MCF 10A (cell line): ENCODE measurements at regions of chrX and their contacts with region 1.

Region 1: GRCh38 chrX:107135049-107135964 is 16.7 kb upstream of the RBM41 start:
- DNase-seq: peak; percentile 79
- H3K4me3 Mint-ChIP-seq: peak overlapping the region; percentile 56
- H3K27ac Mint-ChIP-seq: peak overlapping the region; percentile 96
- H3K4me1 Mint-ChIP-seq: peaks cover 15% of the 10 kb centered on the region
- H3K27me3 Mint-ChIP-seq: peaks cover 55% of the 10 kb centered on the region
- CTCF ChIP-seq: no peak

Region 2: DNA sequence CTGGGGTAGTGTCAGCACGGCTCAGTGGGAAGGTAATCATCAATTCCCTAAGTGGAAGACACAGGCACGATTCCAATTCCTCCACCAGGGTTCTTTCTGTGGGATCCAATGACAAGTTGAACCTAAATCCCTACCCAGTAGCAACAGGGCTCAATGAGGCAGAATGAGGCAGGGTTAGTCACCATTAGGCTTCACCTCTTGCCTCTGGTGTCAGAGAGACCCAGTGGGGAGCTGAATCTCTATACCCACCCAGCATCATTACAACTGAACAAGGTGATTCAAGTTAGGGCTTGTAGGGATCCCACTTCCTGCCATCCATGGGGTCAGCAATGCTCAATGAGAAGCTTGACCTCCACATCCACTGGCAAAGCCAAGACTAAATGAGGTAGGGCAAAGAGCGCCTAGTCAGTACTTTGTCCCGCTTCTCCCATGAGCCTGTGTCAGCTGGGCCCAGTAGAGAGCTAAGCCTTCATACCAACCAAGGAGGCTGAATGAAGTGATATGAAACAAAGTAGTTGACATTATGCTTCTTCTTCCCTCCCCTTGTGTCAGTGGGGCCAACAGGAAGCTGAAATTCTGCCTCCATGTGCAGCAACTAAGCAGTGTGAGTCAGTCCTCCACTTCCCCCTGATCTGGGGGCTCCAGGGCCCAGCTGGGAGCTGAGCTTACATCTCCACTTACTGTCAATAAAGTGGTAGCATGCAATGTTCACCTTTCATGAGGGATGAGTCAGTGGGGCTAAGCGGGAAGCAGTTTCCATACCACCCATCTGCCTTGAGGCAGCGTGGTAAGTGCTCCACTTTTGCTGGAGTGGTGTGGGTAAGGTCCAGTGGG is 19.7 kb after region 1 on chrX:
- CTCF ChIA-PET with region 1: no interaction called
- POLR2A ChIA-PET with region 1: interaction called, 13 read pairs
- intact Hi-C with region 1: no loop called
- DNase-seq: peak; percentile 64
- H3K4me3 Mint-ChIP-seq: peak overlapping the region; percentile 69
- H3K27ac Mint-ChIP-seq: no peak overlapping the region
- H3K4me1 Mint-ChIP-seq: no peaks in the 10 kb centered on the region
- H3K27me3 Mint-ChIP-seq: peaks cover 19% of the 10 kb centered on the region
- CTCF ChIP-seq: no peak